ENCODE measurements at regions of chrX and their contacts with region 1.

Region 1: GRCh38 chrX:2707334-2707760 is 16.3 kb downstream of the CD99 start:
- DNase-seq: peak; percentile 84
- ATAC-seq: peak; percentile 90
- H3K4me3 ChIP-seq: no peak overlapping the region
- H3K27ac ChIP-seq: peak overlapping the region; percentile 63
- H3K4me1 ChIP-seq: peaks cover 32% of the 10 kb centered on the region
- H3K27me3 ChIP-seq: no peaks in the 10 kb centered on the region
- CTCF ChIP-seq: peak; percentile 58
- EP300 ChIP-seq: peak in 1 of 2 experiments; percentile 37; a peak in 1 of 4 replicates
- POLR2A ChIP-seq: no peak
- RAD21 ChIP-seq: peak; percentile 46; the same call in 1 of the 2 replicates

Region 2: DNA sequence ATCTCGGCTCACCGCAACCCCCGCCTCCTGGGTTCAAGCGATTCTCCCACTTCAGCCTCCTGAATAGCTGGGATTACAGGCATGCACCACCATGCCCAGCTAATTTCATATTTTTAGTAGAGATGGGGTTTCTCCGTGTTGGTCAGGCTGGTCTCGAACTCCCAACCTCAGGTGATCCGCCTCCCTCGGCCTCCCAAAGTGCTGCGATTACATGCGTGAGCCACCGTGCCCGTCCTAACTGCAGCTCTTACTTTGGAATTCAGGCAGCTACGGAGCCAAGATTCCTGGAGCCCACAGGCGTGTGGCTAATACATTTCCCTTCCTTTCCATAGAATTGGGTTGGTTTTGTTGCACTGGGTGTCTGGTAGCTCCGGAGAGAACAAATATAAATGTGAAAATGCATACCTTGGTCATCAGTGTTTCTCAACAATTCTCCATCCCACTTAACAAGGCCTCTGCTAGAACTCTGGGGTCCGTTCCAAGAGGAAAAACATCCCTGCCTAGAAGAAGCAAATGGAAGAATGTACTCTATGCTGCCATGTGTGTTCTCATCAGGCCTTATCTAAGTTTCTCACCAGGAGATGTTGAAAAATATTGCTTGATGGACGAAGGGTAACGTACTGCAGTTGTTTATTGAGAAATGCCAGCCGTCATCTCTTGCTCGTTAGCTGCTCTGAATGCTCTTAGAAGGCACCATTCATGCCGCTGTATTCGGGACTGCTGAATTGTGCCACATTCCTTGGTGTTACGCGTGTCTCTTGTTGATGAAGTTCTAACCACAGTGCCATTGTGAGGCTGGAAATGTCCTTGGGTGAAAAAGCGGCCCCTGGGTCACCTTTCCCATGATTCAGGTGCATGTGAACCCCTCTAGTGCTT is 66.8 kb before region 1 on chrX:
- CTCF ChIA-PET with region 1: no interaction called
- POLR2A ChIA-PET with region 1: no interaction called
- in situ Hi-C with region 1: no loop called
- intact Hi-C with region 1: loop called (anchors 1 kb)
- DNase-seq: no peak
- ATAC-seq: no peak
- H3K4me3 ChIP-seq: no peak overlapping the region
- H3K27ac ChIP-seq: no peak overlapping the region
- H3K4me1 ChIP-seq: no peaks in the 10 kb centered on the region
- H3K27me3 ChIP-seq: no peaks in the 10 kb centered on the region; a peak in 1 of 5 replicates
- CTCF ChIP-seq: no peak
- EP300 ChIP-seq: no peak
- POLR2A ChIP-seq: no peak
- RAD21 ChIP-seq: no peak

Region 3: DNA sequence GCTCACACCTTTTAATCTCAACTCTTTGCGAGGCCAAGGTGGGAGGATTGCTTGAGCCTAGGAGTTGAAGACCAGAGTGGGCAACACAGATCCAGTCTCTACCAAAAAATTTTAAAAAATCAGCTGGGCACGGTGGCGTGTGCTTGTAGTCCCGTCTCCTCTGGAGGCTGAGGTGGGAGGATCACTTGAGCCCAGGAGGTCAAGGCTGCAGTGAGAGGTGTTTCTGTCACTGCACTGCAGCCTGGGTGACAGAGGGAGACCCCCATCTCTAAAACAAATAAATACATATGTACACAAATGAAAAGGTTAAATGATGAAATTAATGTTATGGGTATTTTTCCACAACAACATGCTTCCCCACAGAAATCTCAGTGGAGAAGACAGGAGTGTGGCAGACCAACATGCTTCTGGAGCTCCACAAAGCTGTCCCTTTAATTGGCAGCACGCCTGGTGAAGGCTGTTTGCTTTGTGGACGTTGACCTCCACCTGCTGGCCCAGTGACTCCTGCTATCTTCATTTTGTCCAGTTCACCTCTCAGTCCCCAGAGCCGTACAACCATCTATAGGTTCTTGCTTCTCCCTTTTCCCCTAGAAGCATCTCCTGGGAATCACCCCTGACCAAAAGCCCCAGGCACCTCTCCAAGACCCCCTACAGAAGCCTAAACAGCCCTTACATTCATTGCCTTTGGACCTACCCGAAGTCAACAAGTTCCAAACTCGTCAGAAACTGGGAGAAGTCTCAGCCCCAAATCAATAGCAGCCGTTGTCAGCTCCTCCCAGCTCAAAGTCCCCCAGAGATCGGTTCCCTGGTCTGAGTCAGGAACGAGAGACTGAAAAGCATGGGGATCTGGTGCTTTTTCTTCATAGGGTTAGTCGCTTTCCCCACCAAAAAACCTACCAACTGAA is 52.7 kb before region 1 on chrX:
- CTCF ChIA-PET with region 1: no interaction called
- POLR2A ChIA-PET with region 1: no interaction called
- in situ Hi-C with region 1: no loop called
- intact Hi-C with region 1: loop called (anchors 5 kb)
- DNase-seq: peak; percentile 90
- ATAC-seq: peak; percentile 85
- H3K4me3 ChIP-seq: peak overlapping the region; percentile 48 to 68 (median 56)
- H3K27ac ChIP-seq: peak overlapping the region; percentile 95
- H3K4me1 ChIP-seq: peaks cover 56% of the 10 kb centered on the region
- H3K27me3 ChIP-seq: no peaks in the 10 kb centered on the region
- CTCF ChIP-seq: peak; percentile 66
- EP300 ChIP-seq: peak; percentile 1 to 28; a peak in 1 of 4 replicates
- POLR2A ChIP-seq: peak; percentile 64 to 67
- RAD21 ChIP-seq: no peak

Region 4: GRCh38 chrX:2767650-2768455 is 60.5 kb after region 1 on chrX:
- CTCF ChIA-PET with region 1: no interaction called
- POLR2A ChIA-PET with region 1: no interaction called
- in situ Hi-C with region 1: no loop called
- intact Hi-C with region 1: loop called (anchors 10 kb)
- DNase-seq: peak; percentile 37
- ATAC-seq: peak; percentile 79
- H3K4me3 ChIP-seq: peak overlapping the region in 1 of 3 experiments; percentile 37; a peak in 1 of 6 replicates
- H3K27ac ChIP-seq: no peak overlapping the region
- H3K4me1 ChIP-seq: peaks cover 26% of the 10 kb centered on the region
- H3K27me3 ChIP-seq: peaks cover 0 to 4% of the 10 kb centered on the region in 2 experiments; a peak in 1 of 5 replicates
- CTCF ChIP-seq: no peak
- EP300 ChIP-seq: no peak
- POLR2A ChIP-seq: no peak
- RAD21 ChIP-seq: no peak

Measured in HepG2 (cell line).